IMR-90 (cell line): ENCODE measurements at regions of chr3 and their contacts with region 1.

Region 1: DNA sequence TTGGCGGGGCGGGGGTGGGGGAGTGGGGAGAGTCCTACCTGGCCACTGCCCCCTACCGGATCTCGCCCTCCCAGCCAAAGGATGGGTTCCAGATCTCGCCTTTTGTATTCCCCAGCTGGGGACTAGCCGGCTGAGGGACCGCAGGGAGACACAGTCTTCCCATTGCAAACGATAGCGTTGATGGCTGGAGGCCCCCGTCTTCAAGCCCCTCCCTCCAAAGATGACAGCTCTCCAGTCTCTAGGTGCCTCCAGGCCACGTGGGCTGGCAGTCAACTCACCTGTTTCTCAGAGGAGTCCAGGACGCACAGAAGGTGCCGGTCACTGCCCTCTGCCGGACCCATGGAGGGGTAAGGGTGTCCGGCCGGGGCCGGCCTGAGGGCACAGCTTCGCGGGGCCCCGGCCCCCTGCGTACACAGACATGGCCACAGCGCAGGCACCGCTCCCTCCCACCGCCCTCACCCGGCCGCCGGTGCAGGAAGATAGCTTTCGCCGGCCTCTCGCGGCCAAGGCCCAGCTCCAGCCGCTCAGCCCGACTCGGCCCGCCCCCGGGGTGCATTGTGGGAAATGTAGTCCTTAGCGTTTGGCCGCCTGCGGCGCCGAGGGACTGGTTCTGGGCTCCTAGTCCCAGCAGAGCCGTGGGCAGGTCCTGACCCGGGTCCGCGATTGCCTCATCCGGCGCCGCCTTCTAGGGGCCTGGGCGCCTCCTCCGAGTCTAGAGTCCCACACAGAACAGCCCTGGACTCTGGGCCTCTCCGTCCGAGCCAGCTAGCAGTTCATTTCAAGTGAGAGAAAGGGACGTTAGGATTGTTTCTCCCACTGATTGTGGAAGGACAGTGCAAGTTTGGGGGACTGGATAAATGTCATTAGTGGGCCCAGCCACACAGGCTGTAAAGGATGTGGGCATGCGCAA is at the start of gene MON1A:
- DNase-seq: peak; percentile 82
- ATAC-seq: peak; percentile 97
- H3K4me3 ChIP-seq: peak within 1 kb of the TSS; percentile 68
- H3K27ac ChIP-seq: peak within 1 kb of the TSS; percentile 55
- H3K4me1 ChIP-seq: peaks cover 5% of the 10 kb centered on the region
- H3K27me3 ChIP-seq: no peaks in the 10 kb centered on the region
- CTCF ChIP-seq: peak; percentile 16; the same call in 1 of the 2 replicates
- POLR2A ChIP-seq: no peak
- RAD21 ChIP-seq: peak; percentile 24; the same call in 1 of the 2 replicates
- total RNA-seq, gene MON1A: 6.9 and 8.2 TPM in 2 replicates

Region 2: GRCh38 chr3:50008931-50009330 is 79.3 kb after region 1 on chr3:
- CTCF ChIA-PET with region 1: no interaction called
- POLR2A ChIA-PET with region 1: interaction called, 12 read pairs
- dilution Hi-C with region 1: no loop called
- in situ Hi-C with region 1: no loop called
- intact Hi-C with region 1: no loop called
- DNase-seq: peak; percentile 58
- ATAC-seq: peak; percentile 76
- H3K4me3 ChIP-seq: no peak overlapping the region
- H3K27ac ChIP-seq: no peak overlapping the region
- H3K4me1 ChIP-seq: peaks cover 2% of the 10 kb centered on the region
- H3K27me3 ChIP-seq: no peaks in the 10 kb centered on the region
- CTCF ChIP-seq: no peak
- POLR2A ChIP-seq: no peak
- RAD21 ChIP-seq: no peak

Region 3: GRCh38 chr3:50405249-50405648 is 475.7 kb after region 1 on chr3:
- CTCF ChIA-PET with region 1: no interaction called
- POLR2A ChIA-PET with region 1: no interaction called
- dilution Hi-C with region 1: no loop called
- in situ Hi-C with region 1: no loop called
- intact Hi-C with region 1: no loop called
- DNase-seq: peak; percentile 10
- ATAC-seq: no peak; the same call in 1 of the 2 replicates
- H3K4me3 ChIP-seq: no peak overlapping the region
- H3K27ac ChIP-seq: no peak overlapping the region
- H3K4me1 ChIP-seq: no peaks in the 10 kb centered on the region
- H3K27me3 ChIP-seq: peaks cover 25% of the 10 kb centered on the region
- CTCF ChIP-seq: no peak
- POLR2A ChIP-seq: no peak
- RAD21 ChIP-seq: no peak